ENCODE measurements at regions of chr4 and their contacts with region 1.

Region 1: DNA sequence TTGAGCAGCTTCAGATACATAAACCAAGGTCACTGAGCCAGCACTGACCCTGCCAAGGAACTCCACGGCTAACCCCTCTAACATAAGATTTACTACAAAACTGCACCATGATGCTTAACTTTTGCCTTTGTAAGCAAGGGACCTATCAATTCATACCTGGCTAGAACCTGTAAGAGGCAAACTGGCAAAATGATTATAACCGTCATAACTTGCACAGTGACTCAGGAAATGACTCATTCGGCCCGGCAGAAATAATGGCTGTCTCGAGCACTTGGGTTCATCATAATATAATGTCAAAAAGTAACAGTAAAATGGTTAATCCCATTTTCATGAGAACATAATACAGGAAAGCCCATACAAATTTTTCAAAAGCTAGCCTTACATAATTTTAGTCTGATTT is 17.2 kb downstream of the RASGEF1B start:
- DNase-seq: no peak
- H3K4me3 ChIP-seq: no peak overlapping the region
- H3K27ac ChIP-seq: no peak overlapping the region
- H3K4me1 ChIP-seq: no peaks in the 10 kb centered on the region
- CTCF ChIP-seq: no peak

Region 2: GRCh38 chr4:81052119-81053068 is 402.1 kb before region 1 on chr4:
- CTCF ChIA-PET with region 1: no interaction called
- POLR2A ChIA-PET with region 1: no interaction called
- intact Hi-C with region 1: no loop called
- DNase-seq: peak; percentile 99
- H3K4me3 ChIP-seq: peak overlapping the region; percentile 50
- H3K27ac ChIP-seq: peak overlapping the region; percentile 95
- H3K4me1 ChIP-seq: peaks cover 75% of the 10 kb centered on the region
- CTCF ChIP-seq: peak; percentile 100

Region 3: DNA sequence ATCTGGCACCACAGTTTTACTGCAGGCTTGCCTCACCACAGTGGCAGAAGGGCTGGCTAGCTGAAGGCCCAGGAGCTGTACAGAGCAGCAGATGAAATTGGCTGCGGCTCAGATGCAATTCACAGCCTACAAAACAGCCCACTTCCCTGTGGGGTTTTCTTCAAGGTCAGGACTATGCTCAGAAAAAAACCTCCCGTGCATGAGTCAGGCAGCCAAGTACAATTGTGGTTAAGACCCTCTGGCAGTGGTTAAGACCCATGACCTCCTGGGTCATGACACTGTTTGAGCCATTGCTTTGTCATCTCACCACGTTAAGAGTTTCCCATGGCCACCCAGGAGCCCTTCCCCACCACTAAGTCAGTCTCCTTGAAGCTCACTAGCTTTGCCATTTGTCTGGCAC is 643.0 kb after region 1 on chr4:
- CTCF ChIA-PET with region 1: no interaction called
- POLR2A ChIA-PET with region 1: no interaction called
- intact Hi-C with region 1: loop called (anchors 10 kb)
- DNase-seq: no peak
- H3K4me3 ChIP-seq: no peak overlapping the region
- H3K27ac ChIP-seq: no peak overlapping the region
- H3K4me1 ChIP-seq: no peaks in the 10 kb centered on the region
- CTCF ChIP-seq: no peak

Region 4: DNA sequence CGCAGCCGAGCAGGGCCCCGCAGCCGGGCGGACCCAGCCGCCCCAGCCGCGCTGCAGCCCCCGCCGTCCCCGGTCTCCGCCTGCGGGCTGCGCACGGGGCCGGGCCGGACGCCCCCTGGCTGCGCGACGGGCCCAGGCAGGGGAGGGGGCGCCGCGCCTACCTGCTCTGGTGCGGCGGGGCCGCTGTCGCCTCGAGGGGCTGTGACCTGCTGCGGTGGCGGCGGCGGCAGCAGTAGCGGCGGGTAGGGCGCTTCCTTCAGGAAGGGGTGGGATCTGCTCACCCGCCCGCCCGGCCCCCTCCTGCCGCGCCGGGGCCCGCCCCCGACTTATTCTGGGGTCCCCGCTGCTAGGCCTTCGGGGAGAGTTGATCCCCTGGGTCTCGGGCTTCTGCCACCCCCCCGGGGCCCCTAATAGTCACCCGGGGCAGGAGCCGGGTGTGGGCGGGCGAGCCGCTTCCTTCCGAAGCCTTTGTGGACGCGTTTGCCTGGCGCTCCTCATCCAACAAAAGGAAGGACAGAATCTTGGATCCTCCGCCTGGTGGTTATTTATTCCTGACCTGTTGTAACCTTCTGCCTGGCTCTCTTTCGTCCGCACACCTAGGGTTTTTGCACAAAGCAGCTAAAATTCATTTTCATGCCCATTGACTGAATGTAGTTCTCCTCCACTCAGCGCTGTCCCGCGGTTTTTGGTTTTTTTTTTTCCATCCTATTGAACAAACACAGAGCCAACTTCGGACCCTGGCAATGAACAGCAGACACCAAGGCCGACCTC is 1107.4 kb after region 1 on chr4 and contains the start of gene TMEM150C:
- CTCF ChIA-PET with region 1: no interaction called
- POLR2A ChIA-PET with region 1: no interaction called
- intact Hi-C with region 1: no loop called
- DNase-seq: no peak
- H3K4me3 ChIP-seq: no peak within 1 kb of the TSS
- H3K27ac ChIP-seq: no peak within 1 kb of the TSS
- H3K4me1 ChIP-seq: no peaks in the 10 kb centered on the region
- CTCF ChIP-seq: no peak
- total RNA-seq, gene TMEM150C: not detected in 2 replicates

Measured in OCI-LY7 (cell line).